Cardiac septum (tissue), 1 donor: ENCODE measurements at regions of chr12 and their contacts with region 1.

Region 1: GRCh38 chr12:133080368-133081158 is at the start of gene ZNF140:
- DNase-seq: peak; percentile 98
- total RNA-seq, gene ZNF140: 8.4 TPM

Region 2: GRCh38 chr12:132761032-132761920 is 319.3 kb before region 1 on chr12 and contains the start of gene ANKLE2:
- intact Hi-C with region 1: no loop called
- DNase-seq: no peak
- total RNA-seq, gene ANKLE2: 31.4 TPM

Region 3: DNA sequence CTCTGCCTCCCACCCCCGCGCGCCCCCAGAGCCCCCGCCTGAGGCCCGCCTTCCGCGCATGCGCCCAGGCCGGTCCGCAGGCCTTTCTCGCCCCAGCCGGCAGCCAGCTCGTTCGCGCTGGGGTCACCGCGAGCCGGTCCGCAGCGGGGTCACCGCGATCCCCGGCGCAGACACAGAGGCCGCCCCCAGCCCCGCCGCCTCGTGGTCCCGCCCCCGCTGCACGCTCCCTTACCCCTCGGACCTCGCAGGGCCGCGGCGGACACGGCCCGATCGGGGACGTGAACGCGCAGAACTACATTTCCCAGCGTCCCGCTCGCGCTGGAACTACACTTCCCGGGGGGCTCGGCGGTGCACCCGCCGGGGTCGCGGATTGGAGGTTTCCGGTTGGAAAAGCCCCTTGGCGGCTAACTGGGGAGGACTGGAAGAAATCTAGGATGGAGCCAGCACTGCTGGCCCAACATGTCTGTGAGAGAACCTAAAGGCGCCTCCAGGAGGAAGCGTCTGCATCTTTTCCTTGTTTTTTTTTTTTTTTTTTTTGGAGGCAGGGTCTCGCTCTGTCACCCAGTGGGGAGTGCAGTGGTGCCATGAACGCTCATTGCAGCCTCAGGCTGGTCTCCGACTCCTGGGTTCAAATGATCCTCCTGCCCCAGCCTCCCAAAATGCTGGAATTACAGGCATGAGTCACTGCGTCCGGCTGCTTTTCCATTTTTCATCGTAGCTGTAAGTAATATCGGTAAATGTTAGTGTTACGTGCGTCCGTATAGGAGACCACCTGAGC is 124.4 kb before region 1 on chr12 and contains the start of gene ZNF605:
- intact Hi-C with region 1: loop called (anchors 1 kb)
- DNase-seq: peak; percentile 94
- total RNA-seq, gene ZNF605: 12.6 TPM

Region 4: DNA sequence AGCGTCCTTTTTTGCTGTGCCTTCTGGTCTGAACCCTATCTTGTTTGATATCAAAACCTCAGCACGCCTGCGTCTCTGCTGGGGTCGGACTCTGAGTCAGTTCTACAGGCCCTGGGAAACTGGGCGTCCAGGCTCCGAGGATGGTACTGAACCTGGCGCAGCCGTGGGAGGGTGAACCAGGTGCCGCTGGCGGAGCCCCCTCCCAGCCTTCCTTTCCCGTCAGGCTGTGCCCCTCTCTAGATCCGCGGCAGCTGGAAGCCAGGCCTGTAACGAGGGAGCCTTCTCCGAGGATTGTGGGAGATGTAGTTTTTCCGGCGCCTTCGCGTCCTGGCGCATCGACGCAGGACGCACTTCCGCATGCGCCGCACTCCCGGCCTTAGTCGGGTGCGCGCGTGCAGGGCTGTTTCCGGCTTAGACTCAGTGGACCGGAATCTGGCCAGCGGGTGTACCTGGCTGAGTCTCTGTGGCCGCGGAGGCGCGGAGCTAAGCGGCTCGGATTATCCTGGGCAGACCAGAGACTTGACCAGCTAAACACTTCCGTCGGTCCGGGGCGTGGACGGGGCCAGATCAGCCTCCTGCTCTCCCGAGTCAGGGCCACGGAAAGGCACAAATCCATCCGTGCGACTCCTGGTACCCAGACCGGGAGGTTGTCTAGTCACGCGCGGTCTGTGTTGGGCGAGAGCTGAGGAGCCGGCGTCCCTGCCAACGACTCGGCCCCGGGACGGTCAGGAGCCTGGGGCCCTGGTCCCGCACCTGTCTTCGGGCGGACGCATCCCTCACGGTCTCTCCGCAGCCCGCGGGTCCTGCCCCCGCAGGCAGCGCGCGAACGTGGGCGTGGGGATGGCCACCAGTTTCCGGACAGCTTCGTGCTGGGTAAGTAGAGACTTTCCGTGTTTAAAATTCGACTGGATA is 94.3 kb before region 1 on chr12 and contains the start of gene ZNF26:
- intact Hi-C with region 1: loop called (anchors 1 kb)
- DNase-seq: peak; percentile 94
- total RNA-seq, gene ZNF26: 4.4 TPM

Region 5: DNA sequence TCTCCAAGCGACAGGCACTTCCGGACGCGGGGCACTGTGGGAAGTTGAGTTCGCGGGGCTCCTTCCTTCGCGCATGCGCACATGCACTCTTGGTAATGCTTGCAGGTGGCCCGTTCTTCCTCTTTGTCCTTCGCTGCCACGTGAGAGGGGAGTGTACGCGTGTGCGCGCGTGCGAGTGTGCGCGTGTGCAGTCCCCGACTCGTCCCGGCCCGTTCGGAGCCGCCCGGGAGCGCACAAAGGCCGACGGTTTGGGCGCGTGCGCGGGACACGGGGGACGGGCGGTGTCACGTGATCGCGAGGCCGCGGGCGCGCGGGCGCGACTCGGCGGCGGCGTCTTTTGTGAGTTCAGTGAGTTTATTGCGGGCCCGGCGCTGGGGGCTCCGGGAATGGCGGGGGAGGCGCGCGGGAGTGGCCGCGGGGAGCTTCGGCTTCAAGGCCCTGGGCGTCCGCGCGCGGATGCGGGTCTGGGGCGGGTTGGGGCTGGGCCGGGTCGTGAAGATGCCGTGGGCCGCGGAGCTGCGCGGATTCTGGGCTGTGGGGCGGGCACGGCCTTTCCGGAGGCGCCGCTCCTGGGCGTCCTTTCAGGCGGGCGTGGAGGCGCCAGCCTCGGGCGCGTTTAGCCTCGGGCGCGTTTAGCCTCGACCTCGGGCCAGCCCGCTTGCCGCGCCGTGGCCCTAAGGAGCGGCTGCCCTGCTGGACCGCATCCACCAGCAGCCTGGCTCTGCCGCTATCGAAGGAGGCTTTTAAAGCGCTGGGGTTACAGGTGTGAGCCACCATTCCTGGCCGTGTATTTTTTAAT is 43.2 kb before region 1 on chr12 and contains the start of gene ZNF84:
- intact Hi-C with region 1: loop called (anchors 1 kb)
- DNase-seq: peak; percentile 98
- total RNA-seq, gene ZNF84: 19.1 TPM

Region 6: GRCh38 chr12:133130038-133130807 is 49.7 kb after region 1 on chr12 and contains the starts of genes ZNF10 and ZNF891:
- intact Hi-C with region 1: loop called (anchors 1 kb)
- DNase-seq: peak; percentile 98
- total RNA-seq, gene ZNF10: 8.0 TPM
- total RNA-seq, gene ZNF891: 1.1 TPM

Region 7: GRCh38 chr12:133181238-133181959 is 100.8 kb after region 1 on chr12 and contains the start of gene ZNF268:
- intact Hi-C with region 1: loop called (anchors 1 kb)
- DNase-seq: peak; percentile 92
- total RNA-seq, gene ZNF268: 10.4 TPM